ENCODE measurements at regions of chr5 and their contacts with region 1.

Region 1: DNA sequence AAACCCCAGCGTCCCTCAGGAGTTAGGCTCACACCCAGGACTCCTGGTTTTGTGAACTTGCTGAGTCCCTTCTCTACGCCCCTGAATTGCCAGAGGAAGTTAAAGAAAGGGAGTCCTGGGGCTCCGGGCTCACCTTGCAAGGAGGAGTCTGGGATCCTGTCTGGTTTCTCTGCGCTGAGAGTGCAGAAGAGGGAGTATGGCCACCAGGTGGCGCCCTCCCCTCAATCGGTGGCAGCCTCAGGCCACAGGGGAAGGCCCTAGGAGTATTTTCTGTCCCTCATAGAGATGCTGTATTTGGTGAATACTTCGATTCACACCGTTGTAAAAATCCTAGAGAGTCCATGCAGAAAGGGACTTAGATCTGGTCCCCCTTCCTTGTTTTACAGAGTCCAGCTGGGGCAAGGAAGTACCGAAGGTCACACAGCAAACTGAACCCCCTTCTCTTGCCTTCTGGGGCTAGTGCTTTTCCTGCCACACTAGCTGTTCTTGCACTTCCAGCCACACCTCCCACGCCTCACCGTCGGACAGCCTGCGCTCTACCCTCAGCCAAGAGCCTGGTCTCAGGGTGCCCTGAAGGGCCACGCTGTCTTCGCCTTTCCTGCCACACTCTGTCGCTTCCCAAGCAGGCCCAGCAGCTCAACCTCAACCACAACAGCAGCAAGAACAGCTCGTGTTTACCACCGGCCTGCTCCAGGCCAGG is 10.2 kb downstream of the HAND1 start:
- DNase-seq: peak; percentile 84
- H3K4me3 Mint-ChIP-seq: no peak overlapping the region
- H3K27ac Mint-ChIP-seq: no peak overlapping the region
- H3K4me1 Mint-ChIP-seq: peaks cover 6% of the 10 kb centered on the region
- H3K27me3 Mint-ChIP-seq: peaks cover 35% of the 10 kb centered on the region

Region 2: GRCh38 chr5:153974131-153974812 is 493.5 kb before region 1 on chr5:
- CTCF ChIA-PET with region 1: interaction called, 3 read pairs
- POLR2A ChIA-PET with region 1: no interaction called
- intact Hi-C with region 1: loop called (anchors 5 kb)
- DNase-seq: peak; percentile 35
- H3K4me3 Mint-ChIP-seq: no peak overlapping the region
- H3K27ac Mint-ChIP-seq: no peak overlapping the region
- H3K4me1 Mint-ChIP-seq: no peaks in the 10 kb centered on the region
- H3K27me3 Mint-ChIP-seq: peaks cover 3% of the 10 kb centered on the region

Region 3: GRCh38 chr5:154202379-154203260 is 265.2 kb before region 1 on chr5:
- CTCF ChIA-PET with region 1: no interaction called
- POLR2A ChIA-PET with region 1: no interaction called
- intact Hi-C with region 1: no loop called
- DNase-seq: peak; percentile 77
- H3K4me3 Mint-ChIP-seq: peak overlapping the region; percentile 39
- H3K27ac Mint-ChIP-seq: peak overlapping the region; percentile 72
- H3K4me1 Mint-ChIP-seq: peaks cover 60% of the 10 kb centered on the region
- H3K27me3 Mint-ChIP-seq: no peaks in the 10 kb centered on the region

Region 4: GRCh38 chr5:154487541-154487940 is 19.7 kb after region 1 on chr5:
- CTCF ChIA-PET with region 1: interaction called, 10 read pairs
- POLR2A ChIA-PET with region 1: no interaction called
- intact Hi-C with region 1: no loop called
- DNase-seq: peak; percentile 74
- H3K4me3 Mint-ChIP-seq: no peak overlapping the region
- H3K27ac Mint-ChIP-seq: no peak overlapping the region
- H3K4me1 Mint-ChIP-seq: peaks cover 23% of the 10 kb centered on the region
- H3K27me3 Mint-ChIP-seq: peaks cover 67% of the 10 kb centered on the region

Region 5: GRCh38 chr5:154575546-154576428 is 108.0 kb after region 1 on chr5:
- CTCF ChIA-PET with region 1: interaction called, 10 read pairs
- POLR2A ChIA-PET with region 1: no interaction called
- intact Hi-C with region 1: no loop called
- DNase-seq: no peak
- H3K4me3 Mint-ChIP-seq: no peak overlapping the region
- H3K27ac Mint-ChIP-seq: no peak overlapping the region
- H3K4me1 Mint-ChIP-seq: no peaks in the 10 kb centered on the region
- H3K27me3 Mint-ChIP-seq: peaks cover 19% of the 10 kb centered on the region

Region 6: GRCh38 chr5:154610321-154611154 is 142.7 kb after region 1 on chr5:
- CTCF ChIA-PET with region 1: interaction called, 89 read pairs
- POLR2A ChIA-PET with region 1: no interaction called
- intact Hi-C with region 1: loop called (anchors 1 kb)
- DNase-seq: peak; percentile 84
- H3K4me3 Mint-ChIP-seq: no peak overlapping the region
- H3K27ac Mint-ChIP-seq: no peak overlapping the region
- H3K4me1 Mint-ChIP-seq: peaks cover 6% of the 10 kb centered on the region
- H3K27me3 Mint-ChIP-seq: peaks cover 55% of the 10 kb centered on the region

Measured in activated CD4-positive, alpha-beta memory T cell treated with anti-CD3 and anti-CD28 coated beads for 36 hours (primary cell).